ENCODE measurements at regions of chr3 and their contacts with region 1.

Region 1: DNA sequence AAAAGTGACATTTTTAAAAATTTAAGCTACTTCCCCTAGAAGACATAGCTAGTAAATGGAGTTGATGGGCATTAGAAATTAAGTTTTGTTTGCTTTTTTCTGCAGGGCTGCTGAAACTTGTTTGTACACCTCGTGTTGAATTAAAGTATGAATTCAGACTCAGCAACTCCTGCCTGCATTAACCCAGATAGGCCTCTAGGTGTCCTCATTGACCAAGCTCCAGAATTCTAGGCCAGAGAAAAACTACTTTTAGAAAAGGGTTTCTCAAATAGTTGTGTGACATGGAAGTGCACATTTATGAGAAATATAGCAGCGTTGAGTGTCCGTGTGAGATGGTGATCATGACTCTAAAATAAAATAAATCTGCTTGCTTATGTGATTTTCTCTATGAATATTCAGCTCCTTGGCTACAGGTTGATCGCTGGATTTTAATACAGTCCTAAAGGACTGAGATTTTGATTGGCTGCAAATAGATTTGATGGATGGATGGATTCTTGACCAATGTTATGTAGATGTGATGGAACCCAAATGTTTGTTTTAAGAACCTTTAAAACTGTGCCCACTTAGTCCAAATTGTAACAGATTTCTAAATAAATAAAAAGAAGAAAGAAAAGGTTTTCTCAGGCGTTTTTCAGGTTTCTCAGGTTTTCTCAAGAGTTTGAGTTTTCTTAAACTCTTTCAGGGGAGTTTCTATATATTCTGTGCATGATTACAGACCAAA is 39.4 kb upstream of the LMOD3 start:
- DNase-seq: peak; percentile 35
- H3K4me3 Mint-ChIP-seq: no peak overlapping the region
- H3K27ac Mint-ChIP-seq: no peak overlapping the region
- H3K4me1 Mint-ChIP-seq: peaks cover 14% of the 10 kb centered on the region
- H3K27me3 Mint-ChIP-seq: peaks cover 6% of the 10 kb centered on the region

Region 2: DNA sequence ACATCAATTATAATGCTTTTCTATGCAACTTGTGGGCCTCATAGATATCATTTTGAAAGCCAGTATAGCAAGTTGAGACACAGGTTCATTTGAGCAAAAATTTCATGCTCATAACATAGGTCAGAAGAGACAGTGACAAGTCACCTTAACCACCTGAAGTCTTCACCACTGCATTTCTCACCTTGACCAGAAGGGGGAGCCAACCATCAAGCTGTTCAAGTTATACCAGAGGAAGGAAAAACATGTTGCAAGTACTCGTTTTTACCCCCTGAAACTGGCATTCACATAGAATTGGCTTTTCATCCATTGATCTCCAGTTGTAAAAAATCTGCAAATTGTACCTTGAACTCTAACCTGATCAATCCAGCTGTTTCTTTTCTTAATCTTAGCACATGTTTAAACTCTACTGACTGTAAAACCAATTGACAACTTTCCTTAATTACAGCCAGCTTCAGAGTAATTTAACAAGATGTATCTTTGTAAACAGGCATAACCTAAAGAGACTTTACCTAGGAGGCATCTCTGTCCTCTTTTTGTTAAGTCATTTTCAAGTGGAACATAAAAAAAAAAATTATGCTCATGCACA is 40.8 kb before region 1 on chr3:
- CTCF ChIA-PET with region 1: interaction called, 67 read pairs
- POLR2A ChIA-PET with region 1: no interaction called
- intact Hi-C with region 1: loop called (anchors 1 kb)
- DNase-seq: peak; percentile 88
- H3K4me3 Mint-ChIP-seq: no peak overlapping the region
- H3K27ac Mint-ChIP-seq: no peak overlapping the region
- H3K4me1 Mint-ChIP-seq: peaks cover 5% of the 10 kb centered on the region
- H3K27me3 Mint-ChIP-seq: no peaks in the 10 kb centered on the region

Region 3: DNA sequence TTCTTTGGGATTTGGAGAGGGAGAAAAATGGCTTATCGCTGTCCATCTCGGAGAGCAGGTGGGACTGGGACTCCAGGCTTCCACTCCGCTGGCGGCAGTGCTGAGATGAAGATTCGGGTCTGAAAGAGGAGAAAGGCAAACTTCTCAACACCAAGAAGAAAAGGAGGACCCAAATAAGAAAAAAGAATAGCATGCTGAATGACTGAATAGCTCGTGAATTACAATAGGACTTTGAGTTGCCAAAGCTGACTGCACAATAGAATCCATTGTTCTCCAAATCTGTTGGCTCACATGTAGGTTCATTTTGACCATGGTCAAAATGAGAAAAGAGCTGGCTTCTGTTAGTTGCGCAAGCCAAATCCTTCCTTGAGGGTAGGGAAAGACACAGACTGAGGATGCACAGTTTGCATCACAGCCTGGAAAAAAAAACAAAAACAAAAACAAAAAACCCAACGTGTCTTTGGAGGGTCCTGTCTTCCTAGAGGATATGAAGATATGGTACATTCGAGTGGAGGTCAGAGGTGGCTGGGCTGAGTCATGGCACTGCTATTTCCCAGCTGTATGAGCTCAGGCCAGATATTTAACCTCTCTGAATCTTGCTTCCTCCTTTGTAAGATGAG is 20.0 kb after region 1 on chr3:
- CTCF ChIA-PET with region 1: interaction called, 10 read pairs
- POLR2A ChIA-PET with region 1: interaction called, 4 read pairs
- intact Hi-C with region 1: no loop called
- DNase-seq: no peak
- H3K4me3 Mint-ChIP-seq: no peak overlapping the region
- H3K27ac Mint-ChIP-seq: no peak overlapping the region
- H3K4me1 Mint-ChIP-seq: peaks cover 42% of the 10 kb centered on the region
- H3K27me3 Mint-ChIP-seq: no peaks in the 10 kb centered on the region

Region 4: GRCh38 chr3:69236812-69237707 is 75.3 kb after region 1 on chr3:
- CTCF ChIA-PET with region 1: interaction called, 10 read pairs
- POLR2A ChIA-PET with region 1: no interaction called
- intact Hi-C with region 1: no loop called
- DNase-seq: no peak
- H3K4me3 Mint-ChIP-seq: peak overlapping the region; percentile 64
- H3K27ac Mint-ChIP-seq: peak overlapping the region; percentile 20
- H3K4me1 Mint-ChIP-seq: peaks cover 17% of the 10 kb centered on the region
- H3K27me3 Mint-ChIP-seq: no peaks in the 10 kb centered on the region

Region 5: DNA sequence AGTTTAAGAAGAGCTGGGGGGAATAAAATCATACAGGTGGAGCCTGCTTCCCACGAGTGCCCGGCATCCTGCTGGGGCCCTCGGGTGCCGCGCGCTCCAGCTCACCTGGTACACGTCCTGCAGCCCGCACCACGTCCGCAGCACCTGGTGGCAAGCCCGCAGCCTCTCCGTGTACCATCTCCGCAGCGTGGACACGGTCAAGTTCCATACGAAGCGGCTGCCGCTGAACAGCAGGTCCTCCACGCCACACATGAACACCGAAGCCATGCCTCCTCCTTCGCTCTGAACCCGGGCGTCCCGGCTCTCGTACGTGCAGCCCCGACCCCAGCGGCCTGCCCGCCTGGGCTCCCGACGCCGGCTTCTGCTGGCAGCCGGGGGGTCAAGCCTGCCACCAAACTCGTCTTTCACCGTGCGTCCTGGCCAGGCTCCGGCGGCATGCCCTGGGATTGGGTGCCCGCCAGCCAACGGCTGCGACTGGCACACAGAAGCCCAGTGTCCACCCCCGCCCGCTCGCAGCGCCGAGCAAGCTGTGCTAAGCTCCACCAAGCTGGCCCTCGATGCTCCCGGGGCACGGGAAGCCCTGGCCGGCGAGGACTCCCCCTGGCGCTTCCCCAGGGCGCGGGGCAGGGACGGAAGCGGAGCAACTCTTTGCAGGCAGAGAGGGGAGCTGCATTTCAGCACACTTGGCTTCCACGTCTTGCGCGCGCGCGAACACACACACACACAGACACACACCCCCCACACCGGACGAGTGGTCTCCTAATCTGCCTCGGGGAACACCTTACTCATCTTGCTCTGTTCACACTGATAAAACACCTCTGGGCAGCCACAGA is 224.2 kb after region 1 on chr3 and contains the start of gene FRMD4B:
- CTCF ChIA-PET with region 1: interaction called, 21 read pairs
- POLR2A ChIA-PET with region 1: no interaction called
- intact Hi-C with region 1: no loop called
- DNase-seq: peak; percentile 54
- H3K4me3 Mint-ChIP-seq: peak within 1 kb of the TSS; percentile 58
- H3K27ac Mint-ChIP-seq: no peak within 1 kb of the TSS
- H3K4me1 Mint-ChIP-seq: peaks cover 10% of the 10 kb centered on the region
- H3K27me3 Mint-ChIP-seq: peaks cover 53% of the 10 kb centered on the region
- total RNA-seq, gene FRMD4B: 29.1 to 32.8 TPM

Region 6: DNA sequence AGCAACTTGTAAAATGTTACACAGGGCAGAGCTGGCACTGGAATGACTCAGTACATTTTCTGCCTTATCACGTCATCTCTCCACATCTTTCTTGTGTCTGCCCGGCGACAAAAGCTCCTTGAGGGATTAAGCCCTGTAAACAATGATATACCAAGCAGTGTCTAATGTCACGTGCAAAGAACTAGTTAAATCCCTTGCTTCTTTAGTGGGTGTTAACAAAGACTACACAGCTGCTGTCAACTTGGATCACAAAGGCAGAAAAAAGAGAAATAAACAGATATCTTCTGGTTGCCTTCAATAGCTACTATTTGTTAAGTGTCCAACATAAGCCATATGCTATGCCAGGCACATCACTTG is 272.2 kb after region 1 on chr3:
- CTCF ChIA-PET with region 1: interaction called, 12 read pairs
- POLR2A ChIA-PET with region 1: no interaction called
- intact Hi-C with region 1: loop called (anchors 2 kb)
- DNase-seq: peak; percentile 38
- H3K4me3 Mint-ChIP-seq: no peak overlapping the region
- H3K27ac Mint-ChIP-seq: peak overlapping the region; percentile 66
- H3K4me1 Mint-ChIP-seq: peaks cover 47% of the 10 kb centered on the region
- H3K27me3 Mint-ChIP-seq: peaks cover 26% of the 10 kb centered on the region

Region 7: GRCh38 chr3:69710153-69710977 is 548.6 kb after region 1 on chr3:
- CTCF ChIA-PET with region 1: no interaction called
- POLR2A ChIA-PET with region 1: no interaction called
- intact Hi-C with region 1: no loop called
- DNase-seq: no peak
- H3K4me3 Mint-ChIP-seq: no peak overlapping the region
- H3K27ac Mint-ChIP-seq: no peak overlapping the region
- H3K4me1 Mint-ChIP-seq: no peaks in the 10 kb centered on the region
- H3K27me3 Mint-ChIP-seq: no peaks in the 10 kb centered on the region

Measured in activated CD4-positive, alpha-beta memory T cell treated with anti-CD3 and anti-CD28 coated beads for 36 hours (primary cell).